ENCODE measurements at regions of chr15 and their contacts with region 1.

Region 1: DNA sequence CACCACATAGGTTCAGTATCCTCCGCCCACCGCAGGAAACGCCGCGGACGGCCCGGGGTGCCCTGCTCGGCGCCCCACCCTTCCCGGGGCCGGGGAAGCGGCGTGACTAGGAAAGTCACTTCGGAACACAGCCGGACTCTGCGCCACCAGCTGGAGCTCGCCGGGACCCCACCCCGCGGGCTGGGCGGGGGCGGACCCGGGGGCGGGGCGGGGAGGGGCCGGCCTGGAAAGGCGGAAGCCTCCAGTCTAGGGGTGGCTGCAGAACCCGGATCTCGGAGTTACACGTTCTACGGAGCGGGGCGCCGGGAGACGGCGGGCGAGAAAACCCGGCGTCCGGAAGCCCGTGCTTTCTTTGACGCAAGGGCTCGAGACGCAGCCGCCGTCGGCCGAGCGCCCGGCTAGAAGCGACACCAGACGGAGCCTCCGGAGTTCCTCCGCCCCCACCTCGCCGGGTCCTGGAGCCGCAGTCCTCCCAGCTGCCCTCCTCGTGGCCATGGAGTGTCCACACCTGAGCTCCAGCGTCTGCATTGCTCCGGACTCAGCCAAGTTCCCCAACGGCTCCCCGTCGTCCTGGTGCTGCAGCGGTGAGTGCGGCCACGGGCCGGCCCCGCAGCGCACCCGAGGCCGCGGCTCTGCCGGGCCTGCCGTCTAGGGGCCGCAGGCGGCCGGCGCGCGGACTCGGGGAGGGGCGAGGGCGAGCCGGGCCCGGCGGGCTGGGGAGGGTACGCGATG is at the start of gene USP3:
- DNase-seq: peak; percentile 48
- H3K4me3 ChIP-seq: peak within 1 kb of the TSS; percentile 88
- H3K27me3 ChIP-seq: no peaks in the 10 kb centered on the region
- CTCF ChIP-seq: peak; percentile 26; the same call in 1 of the 2 replicates
- polyA plus RNA-seq, gene USP3: 13.3 and 17.2 TPM in 2 replicates

Region 2: GRCh38 chr15:63473999-63474809 is 30.2 kb before region 1 on chr15:
- CTCF ChIA-PET with region 1: interaction called, 12 read pairs
- POLR2A ChIA-PET with region 1: interaction called, 5 read pairs
- DNase-seq: no peak
- H3K4me3 ChIP-seq: no peak overlapping the region
- H3K27me3 ChIP-seq: no peaks in the 10 kb centered on the region
- CTCF ChIP-seq: no peak

Region 3: DNA sequence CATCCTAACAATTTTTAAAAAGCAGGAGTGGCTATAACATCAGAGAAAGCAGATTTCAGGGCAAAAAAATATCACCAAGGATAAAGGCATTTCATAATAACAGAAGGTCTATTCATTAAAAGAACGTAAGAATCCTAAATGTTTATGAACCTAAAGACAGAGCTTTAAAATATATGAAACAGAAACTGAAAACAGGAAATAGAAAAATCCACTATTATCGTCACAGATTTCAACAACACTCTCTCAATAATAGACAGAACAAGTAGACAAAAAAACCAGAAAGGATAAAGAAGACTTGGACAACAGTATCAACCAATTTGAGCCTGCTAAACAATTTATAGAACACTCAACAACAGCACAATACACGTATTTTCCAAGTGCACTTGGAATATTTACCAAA is 164.2 kb after region 1 on chr15:
- CTCF ChIA-PET with region 1: no interaction called
- POLR2A ChIA-PET with region 1: no interaction called
- DNase-seq: no peak
- H3K4me3 ChIP-seq: no peak overlapping the region
- H3K27me3 ChIP-seq: no peaks in the 10 kb centered on the region
- CTCF ChIP-seq: no peak

Measured in BJ (cell line).